Caco-2 (cell line): ENCODE measurements at regions of chr19 and their contacts with region 1.

Region 1: DNA sequence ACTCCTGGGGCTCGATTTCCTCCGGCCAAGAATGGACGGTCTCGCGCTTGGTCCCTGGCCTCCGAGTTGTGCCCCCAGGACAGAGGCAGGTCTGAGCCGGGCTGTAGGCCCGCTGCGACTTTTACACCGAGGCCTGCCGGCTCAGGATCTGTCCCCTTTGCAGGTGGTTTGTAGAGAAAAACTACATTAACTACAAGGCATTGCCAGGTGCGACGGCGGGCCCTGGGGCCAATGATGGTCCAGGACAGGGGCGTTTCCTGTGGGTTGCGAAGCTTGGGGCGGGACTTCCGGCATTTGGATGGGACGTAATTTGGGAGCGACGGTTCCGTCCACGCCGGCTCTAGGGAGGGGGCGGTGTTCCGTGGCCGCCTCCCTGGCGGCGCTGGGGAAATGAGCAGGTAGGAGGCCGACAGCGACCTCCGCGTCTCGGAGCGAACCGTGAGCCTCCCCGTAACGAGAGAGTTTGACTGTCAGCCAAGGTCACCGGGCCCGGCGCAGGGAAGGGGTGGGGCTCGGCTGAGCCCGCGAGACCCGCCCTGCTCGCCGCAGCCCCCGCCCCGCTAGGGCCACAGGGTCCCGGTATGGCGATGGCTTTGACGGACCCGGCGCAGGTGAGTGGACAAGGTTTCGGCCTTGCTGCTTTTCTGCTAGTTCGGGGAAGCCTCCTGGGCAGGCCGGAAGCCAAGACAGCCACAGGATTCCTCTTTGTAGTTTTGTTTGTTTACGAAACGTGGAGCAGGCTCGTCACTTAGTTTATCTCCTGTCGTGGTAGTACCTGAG is at the start of gene ZNF805:
- DNase-seq: peak; percentile 96 to 97
- H3K4me3 ChIP-seq: peak within 1 kb of the TSS; percentile 77
- H3K4me3 Mint-ChIP-seq: peak within 1 kb of the TSS; percentile 75
- H3K27ac Mint-ChIP-seq: peak within 1 kb of the TSS; percentile 90
- H3K4me1 ChIP-seq: peaks cover 7% of the 10 kb centered on the region; the same call in 1 of the 2 replicates
- H3K4me1 Mint-ChIP-seq: no peaks in the 10 kb centered on the region
- H3K27me3 ChIP-seq: no peaks in the 10 kb centered on the region
- H3K27me3 Mint-ChIP-seq: no peaks in the 10 kb centered on the region
- CTCF ChIP-seq: no peak
- total RNA-seq, gene ZNF805: 13.6 and 13.8 TPM in 2 replicates

Region 2: DNA sequence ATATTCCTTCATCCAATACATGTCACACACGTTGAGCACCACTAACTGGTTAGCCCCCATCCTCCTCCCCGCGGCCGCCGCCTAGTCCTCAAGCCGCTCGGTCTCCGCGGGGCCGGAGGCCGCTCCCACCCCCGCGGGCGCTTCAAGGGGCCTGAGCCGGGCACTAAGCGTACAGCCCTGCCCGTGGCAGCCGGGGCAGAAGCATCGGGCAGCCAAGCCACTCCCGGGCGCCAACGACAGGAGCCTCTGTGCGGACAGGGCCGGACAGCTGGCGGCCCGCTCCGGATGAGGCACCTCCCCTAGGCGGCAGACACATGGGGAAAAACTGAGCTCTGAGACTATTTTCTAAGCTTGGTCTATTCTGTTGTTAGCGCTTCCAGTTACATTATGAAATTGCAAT is 77.0 kb after region 1 on chr19:
- CTCF ChIA-PET with region 1: no interaction called
- POLR2A ChIA-PET with region 1: no interaction called
- intact Hi-C with region 1: no loop called
- DNase-seq: no peak
- H3K4me3 ChIP-seq: no peak overlapping the region
- H3K4me3 Mint-ChIP-seq: no peak overlapping the region
- H3K27ac Mint-ChIP-seq: no peak overlapping the region
- H3K4me1 ChIP-seq: no peaks in the 10 kb centered on the region
- H3K4me1 Mint-ChIP-seq: no peaks in the 10 kb centered on the region
- H3K27me3 ChIP-seq: no peaks in the 10 kb centered on the region
- H3K27me3 Mint-ChIP-seq: peaks cover 3% of the 10 kb centered on the region
- CTCF ChIP-seq: no peak

Region 3: GRCh38 chr19:57362997-57363705 is 122.7 kb after region 1 on chr19 and contains the starts of genes TRAPPC2B and ZNF547:
- CTCF ChIA-PET with region 1: no interaction called
- POLR2A ChIA-PET with region 1: no interaction called
- intact Hi-C with region 1: loop called (anchors 1 kb)
- DNase-seq: peak; percentile 98 to 99
- H3K4me3 ChIP-seq: peak within 1 kb of the TSS; percentile 77
- H3K4me3 Mint-ChIP-seq: peak within 1 kb of the TSS; percentile 84
- H3K27ac Mint-ChIP-seq: peak within 1 kb of the TSS; percentile 95
- H3K4me1 ChIP-seq: peaks cover 3% of the 10 kb centered on the region; the same call in 1 of the 2 replicates
- H3K4me1 Mint-ChIP-seq: peaks cover 21% of the 10 kb centered on the region
- H3K27me3 ChIP-seq: no peaks in the 10 kb centered on the region
- H3K27me3 Mint-ChIP-seq: no peaks in the 10 kb centered on the region
- CTCF ChIP-seq: no peak
- total RNA-seq, gene TRAPPC2B: 7.0 and 8.6 TPM in 2 replicates
- total RNA-seq, gene ZNF547: 0.95 and 1.8 TPM in 2 replicates